Activated CD4-positive, alpha-beta T cell treated with anti-CD3 and anti-CD28 coated beads for 36 hours (primary cell): ENCODE measurements at regions of chrX and their contacts with region 1.

Region 1: DNA sequence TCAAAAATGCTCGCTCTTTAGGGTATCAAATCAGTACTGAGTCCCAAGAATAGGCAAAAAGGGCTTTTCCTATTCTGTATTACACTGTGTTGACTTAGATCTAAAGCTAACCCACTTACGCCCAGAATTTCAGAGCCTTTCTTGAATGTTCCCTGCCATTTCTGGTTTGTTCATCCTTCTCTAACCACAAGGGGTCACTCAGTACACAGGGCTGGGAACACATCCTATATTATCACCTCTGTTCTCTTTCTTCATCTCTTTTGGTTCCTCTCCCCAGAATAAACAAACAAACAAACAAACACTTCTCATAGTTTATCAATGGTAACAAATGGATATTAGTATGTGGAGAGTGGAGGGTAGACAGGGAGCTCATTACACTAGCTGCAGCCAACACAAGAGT is 25.5 kb upstream of the MORC4 start:
- DNase-seq: no peak
- ATAC-seq: no peak
- H3K4me3 Mint-ChIP-seq: no peak overlapping the region
- H3K27ac Mint-ChIP-seq: no peak overlapping the region
- H3K4me1 Mint-ChIP-seq: no peaks in the 10 kb centered on the region
- H3K27me3 Mint-ChIP-seq: no peaks in the 10 kb centered on the region

Region 2: GRCh38 chrX:107439477-107439876 is 413.9 kb after region 1 on chrX:
- CTCF ChIA-PET with region 1: no interaction called
- POLR2A ChIA-PET with region 1: no interaction called
- intact Hi-C with region 1: loop called in 1 of 2 experiments (anchors 10 kb)
- DNase-seq: no peak
- ATAC-seq: no peak
- H3K4me3 Mint-ChIP-seq: no peak overlapping the region
- H3K27ac Mint-ChIP-seq: no peak overlapping the region
- H3K4me1 Mint-ChIP-seq: no peaks in the 10 kb centered on the region
- H3K27me3 Mint-ChIP-seq: peaks cover 3% of the 10 kb centered on the region